IMR-90 (cell line): ENCODE measurements at regions of chr4 and their contacts with region 1.

Region 1: DNA sequence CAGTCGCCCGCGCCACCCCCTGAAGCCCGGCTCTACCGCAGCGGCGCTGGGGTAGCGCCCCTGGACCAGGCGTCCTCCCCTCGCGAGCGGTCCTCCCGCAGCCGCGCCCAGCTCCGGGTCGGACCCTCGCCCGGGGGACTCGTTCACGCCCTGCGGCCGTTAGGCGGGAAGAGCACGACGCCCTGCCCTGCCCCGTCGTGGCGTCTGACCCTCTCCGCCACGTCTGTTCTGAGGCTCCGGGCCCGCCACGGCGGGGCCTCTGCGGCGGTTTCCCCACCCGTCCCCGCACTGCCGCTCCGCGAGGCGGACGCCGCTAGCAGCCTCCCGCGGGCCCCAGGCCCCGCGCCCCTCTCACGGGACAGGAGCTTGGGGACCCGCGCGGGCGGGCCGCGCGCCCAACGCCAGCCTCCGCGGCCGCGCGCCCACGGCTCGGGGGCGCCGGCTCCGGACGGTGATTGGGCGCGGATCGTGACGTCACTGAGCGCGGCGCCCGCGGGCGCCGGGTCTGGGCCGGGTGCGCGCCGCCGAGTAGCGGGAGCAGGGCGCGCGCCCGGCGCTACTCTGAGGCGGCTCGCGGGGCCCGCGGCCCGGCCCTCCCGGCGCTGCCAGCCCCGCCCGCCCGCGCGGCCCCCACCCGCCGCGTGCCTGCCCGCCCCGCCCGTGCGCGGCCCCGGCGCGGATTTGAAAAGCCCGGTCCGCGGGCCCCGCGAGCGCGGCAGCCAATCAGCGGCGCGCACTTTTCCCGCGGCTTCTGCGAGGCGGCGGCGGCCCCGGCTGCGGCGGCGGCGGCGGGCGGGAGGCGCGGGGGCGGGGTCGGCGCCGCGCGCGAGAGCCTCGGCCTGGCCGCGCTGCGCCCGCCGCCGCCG is at the start of gene NSD2:
- DNase-seq: peak; percentile 87
- ATAC-seq: peak; percentile 75
- H3K4me3 ChIP-seq: peak within 1 kb of the TSS; percentile 96
- H3K27ac ChIP-seq: peak within 1 kb of the TSS; percentile 96
- H3K4me1 ChIP-seq: peaks cover 13% of the 10 kb centered on the region
- H3K27me3 ChIP-seq: peaks cover 2% of the 10 kb centered on the region; the same call in 1 of the 2 replicates
- CTCF ChIP-seq: no peak
- POLR2A ChIP-seq: peak; percentile 83
- RAD21 ChIP-seq: no peak
- total RNA-seq, gene NSD2: 62.2 and 68.1 TPM in 2 replicates

Region 2: DNA sequence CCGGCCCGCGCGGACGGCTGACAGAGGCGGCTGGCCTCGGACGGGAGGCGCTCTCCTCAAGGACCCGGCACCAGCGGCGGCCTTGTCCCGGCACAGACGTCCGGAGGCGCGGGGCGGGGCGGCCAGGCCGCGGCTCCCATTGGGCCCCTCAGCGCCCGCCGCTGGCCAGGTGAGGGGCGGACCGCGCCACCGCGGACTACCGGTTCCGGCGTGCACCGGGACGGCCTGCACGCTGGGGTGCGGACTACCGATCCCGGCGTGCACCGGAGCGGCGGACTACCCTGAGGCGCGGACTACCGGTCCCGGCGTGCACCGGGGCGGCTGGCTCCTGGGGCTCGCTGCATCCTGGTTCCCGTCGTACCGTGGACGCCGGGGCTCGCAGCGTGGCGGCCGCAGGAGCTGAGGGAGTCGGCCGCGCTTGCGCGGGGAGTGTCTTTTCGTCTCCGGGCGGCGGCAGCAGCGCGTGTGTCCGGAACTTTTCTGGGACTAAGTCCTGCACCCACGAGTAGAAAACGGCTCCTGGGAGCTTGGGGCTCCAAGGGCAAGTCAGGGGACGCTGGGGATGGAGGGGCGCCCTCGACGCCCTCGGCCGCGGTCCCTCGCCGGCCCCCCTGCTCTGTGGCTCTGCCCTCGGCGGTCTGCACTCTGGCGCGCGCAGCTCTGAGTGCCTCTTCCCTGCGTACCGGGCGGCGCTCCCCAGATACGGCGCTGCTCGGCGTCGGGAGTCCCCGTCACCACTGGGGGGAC is 14.6 kb before region 1 on chr4 and contains the start of gene LETM1:
- CTCF ChIA-PET with region 1: interaction called, 3 read pairs
- POLR2A ChIA-PET with region 1: no interaction called
- dilution Hi-C with region 1: no loop called
- in situ Hi-C with region 1: no loop called
- intact Hi-C with region 1: loop called (anchors 2 kb)
- DNase-seq: peak; percentile 95
- ATAC-seq: peak; percentile 95
- H3K4me3 ChIP-seq: peak within 1 kb of the TSS; percentile 94
- H3K27ac ChIP-seq: peak within 1 kb of the TSS; percentile 81
- H3K4me1 ChIP-seq: peaks cover 19% of the 10 kb centered on the region
- H3K27me3 ChIP-seq: no peaks in the 10 kb centered on the region
- CTCF ChIP-seq: 0 out of 2 replicates have a peak, but pooled peaks have one; percentile 15
- POLR2A ChIP-seq: peak; percentile 67
- RAD21 ChIP-seq: no peak
- total RNA-seq, gene LETM1: 49.3 and 68.0 TPM in 2 replicates